ENCODE measurements at regions of chr12 and their contacts with region 1.

Region 1: DNA sequence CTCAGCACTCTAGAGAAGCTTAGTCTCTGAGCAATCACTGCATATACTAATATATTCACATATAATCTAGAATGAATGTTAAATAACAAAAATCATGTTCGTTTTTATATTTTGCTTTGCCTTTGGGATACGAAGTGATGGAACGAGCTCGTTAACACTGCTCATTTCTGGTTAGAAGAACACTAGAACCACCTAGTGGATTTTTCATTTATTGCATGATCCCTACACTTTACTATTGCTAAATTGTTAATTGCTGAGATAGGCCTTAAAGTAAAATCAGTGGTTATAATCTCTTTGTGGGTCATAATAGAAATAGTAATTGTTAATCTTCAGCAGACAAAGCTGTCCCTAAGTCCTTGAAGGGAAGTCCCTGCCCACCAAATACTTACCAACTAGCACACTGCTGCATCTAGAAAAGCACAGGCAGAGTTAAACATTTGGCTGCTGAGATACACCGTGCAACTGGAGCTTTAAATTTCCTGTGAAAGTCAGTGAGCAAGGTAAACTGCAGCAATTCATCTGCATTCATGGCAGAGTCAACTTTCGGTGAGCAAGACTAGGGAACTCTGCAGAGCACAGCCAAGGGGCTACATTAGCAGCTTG is 353.7 kb downstream of the APAF1 start:
- DNase-seq: no peak
- H3K4me3 ChIP-seq: no peak overlapping the region
- H3K27ac ChIP-seq: no peak overlapping the region
- H3K4me1 ChIP-seq: no peaks in the 10 kb centered on the region
- H3K27me3 ChIP-seq: no peaks in the 10 kb centered on the region
- CTCF ChIP-seq: peak in 2 of 3 experiments; percentile 60 to 61; a peak in 3 of 4 replicates
- EP300 ChIP-seq: no peak
- POLR2A ChIP-seq: no peak
- RAD21 ChIP-seq: peak; percentile 90

Region 2: DNA sequence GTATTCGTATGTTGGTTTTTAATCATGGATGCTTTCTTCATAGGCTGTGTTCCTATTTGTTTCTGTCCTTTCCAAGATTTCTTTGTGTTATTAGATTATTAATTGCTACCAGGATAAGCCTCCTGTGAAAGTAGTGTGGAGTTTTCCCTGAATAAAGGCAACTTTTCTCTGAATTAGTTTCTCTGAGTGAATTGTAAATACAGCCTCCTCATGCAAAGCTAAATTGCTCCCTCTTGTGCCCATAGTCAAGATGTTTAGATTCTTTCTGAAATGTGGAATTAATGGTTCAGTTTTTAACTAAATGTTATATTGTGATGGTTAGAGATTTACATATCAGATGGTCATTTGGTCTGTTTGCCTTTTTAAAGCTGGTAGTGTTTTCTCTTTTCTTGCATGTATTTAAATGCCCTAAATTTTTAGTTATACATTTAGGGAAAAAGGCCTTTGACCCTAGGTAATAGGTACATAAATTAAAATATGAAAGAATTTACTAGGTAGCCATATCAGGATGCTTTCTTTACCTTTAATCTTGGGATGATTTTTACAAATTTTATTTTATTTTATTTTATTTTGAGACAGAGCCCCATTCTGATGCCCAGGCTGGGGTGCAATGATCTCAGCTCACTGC is 344.8 kb before region 1 on chr12:
- CTCF ChIA-PET with region 1: no interaction called
- POLR2A ChIA-PET with region 1: no interaction called
- DNase-seq: no peak
- H3K4me3 ChIP-seq: no peak overlapping the region
- H3K27ac ChIP-seq: no peak overlapping the region
- H3K4me1 ChIP-seq: no peaks in the 10 kb centered on the region
- H3K27me3 ChIP-seq: no peaks in the 10 kb centered on the region
- CTCF ChIP-seq: peak in 2 of 3 experiments; percentile 51 to 60; a peak in 2 of 4 replicates
- EP300 ChIP-seq: no peak
- POLR2A ChIP-seq: no peak
- RAD21 ChIP-seq: peak; percentile 83 to 85

Region 3: GRCh38 chr12:98698603-98699463 is 300.0 kb before region 1 on chr12:
- CTCF ChIA-PET with region 1: interaction called, 15 read pairs
- POLR2A ChIA-PET with region 1: no interaction called
- DNase-seq: peak in 1 of 2 experiments; percentile 54
- H3K4me3 ChIP-seq: no peak overlapping the region
- H3K27ac ChIP-seq: no peak overlapping the region
- H3K4me1 ChIP-seq: peaks cover 2 to 11% (median 5%) of the 10 kb centered on the region in 4 experiments; a peak in 3 of 7 replicates
- H3K27me3 ChIP-seq: no peaks in the 10 kb centered on the region
- CTCF ChIP-seq: peak; percentile 66 to 85 (median 76)
- EP300 ChIP-seq: no peak
- POLR2A ChIP-seq: no peak
- RAD21 ChIP-seq: peak; percentile 82

Region 4: GRCh38 chr12:98725476-98726247 is 273.1 kb before region 1 on chr12:
- CTCF ChIA-PET with region 1: interaction called, 28 read pairs
- POLR2A ChIA-PET with region 1: interaction called, 3 read pairs
- DNase-seq: no peak
- H3K4me3 ChIP-seq: no peak overlapping the region
- H3K27ac ChIP-seq: no peak overlapping the region
- H3K4me1 ChIP-seq: no peaks in the 10 kb centered on the region
- H3K27me3 ChIP-seq: no peaks in the 10 kb centered on the region
- CTCF ChIP-seq: peak; percentile 63 to 80 (median 77)
- EP300 ChIP-seq: no peak
- POLR2A ChIP-seq: no peak
- RAD21 ChIP-seq: peak; percentile 87 to 88

Region 5: DNA sequence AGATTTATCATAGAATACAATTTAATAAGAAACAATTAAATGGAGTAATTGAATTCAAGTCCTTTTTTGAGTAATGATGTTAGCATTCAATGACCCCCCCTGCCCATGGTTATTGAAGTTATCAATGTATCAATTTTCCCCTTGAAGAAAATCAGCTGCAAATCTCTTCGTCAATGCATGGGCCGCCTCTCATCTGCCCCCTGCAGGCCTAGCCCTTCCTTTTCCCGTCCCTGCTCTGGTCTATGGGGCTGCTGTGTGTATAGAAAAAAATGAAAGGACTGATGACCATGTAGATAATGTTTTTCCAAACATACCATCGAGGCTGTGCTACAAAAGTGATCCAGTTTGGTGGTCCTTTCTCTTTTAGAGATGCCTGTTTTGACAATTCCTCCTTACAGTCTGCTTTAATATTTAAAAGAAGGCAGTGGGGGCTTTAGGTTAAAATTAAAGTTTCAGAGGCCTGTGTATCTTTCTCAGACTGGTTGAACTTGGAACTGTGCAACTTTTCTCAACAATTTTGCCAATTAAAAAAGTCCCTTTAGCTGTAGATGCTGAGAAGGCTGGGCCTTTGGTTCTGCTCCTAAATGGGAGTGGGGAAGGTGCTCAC is 255.3 kb before region 1 on chr12:
- CTCF ChIA-PET with region 1: interaction called, 19 read pairs
- POLR2A ChIA-PET with region 1: no interaction called
- DNase-seq: peak in 1 of 2 experiments; percentile 63
- H3K4me3 ChIP-seq: no peak overlapping the region
- H3K27ac ChIP-seq: no peak overlapping the region
- H3K4me1 ChIP-seq: peaks cover 0 to 12% (median 3%) of the 10 kb centered on the region in 4 experiments; a peak in 5 of 7 replicates
- H3K27me3 ChIP-seq: peaks cover 0 to 12% (median 7%) of the 10 kb centered on the region in 4 experiments; a peak in 5 of 7 replicates
- CTCF ChIP-seq: peak; percentile 63 to 85 (median 74)
- EP300 ChIP-seq: no peak
- POLR2A ChIP-seq: no peak
- RAD21 ChIP-seq: peak; percentile 50 to 62

Region 6: DNA sequence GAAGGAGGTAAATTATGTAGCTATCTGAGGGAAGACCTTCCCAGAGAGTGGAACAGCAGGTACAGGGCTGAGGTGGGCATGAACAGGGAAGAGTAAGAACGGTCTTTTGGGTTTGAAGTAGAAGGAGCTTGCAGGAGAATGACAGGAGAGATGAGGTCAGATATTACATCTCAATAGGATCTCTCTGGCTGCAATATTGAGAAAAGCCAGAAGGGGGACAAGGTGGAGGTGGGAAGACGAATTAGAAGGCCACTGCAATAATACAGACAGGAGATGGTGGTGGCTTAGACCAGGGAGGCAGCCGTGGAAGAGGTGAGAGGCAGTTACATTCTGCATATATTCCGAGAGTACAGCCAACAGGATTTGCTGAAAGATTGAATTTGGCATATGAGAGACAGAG is 43.5 kb before region 1 on chr12:
- CTCF ChIA-PET with region 1: interaction called, 32 read pairs
- POLR2A ChIA-PET with region 1: no interaction called
- DNase-seq: peak; percentile 31 to 57
- H3K4me3 ChIP-seq: no peak overlapping the region
- H3K27ac ChIP-seq: no peak overlapping the region
- H3K4me1 ChIP-seq: no peaks in the 10 kb centered on the region
- H3K27me3 ChIP-seq: no peaks in the 10 kb centered on the region
- CTCF ChIP-seq: peak in 2 of 3 experiments; percentile 56 to 63; a peak in 3 of 4 replicates
- EP300 ChIP-seq: no peak
- POLR2A ChIP-seq: no peak
- RAD21 ChIP-seq: peak; percentile 55 to 65

Measured in H1 (cell line).